PC-9 (cell line): ENCODE measurements at regions of chr17 and their contacts with region 1.

Region 1: DNA sequence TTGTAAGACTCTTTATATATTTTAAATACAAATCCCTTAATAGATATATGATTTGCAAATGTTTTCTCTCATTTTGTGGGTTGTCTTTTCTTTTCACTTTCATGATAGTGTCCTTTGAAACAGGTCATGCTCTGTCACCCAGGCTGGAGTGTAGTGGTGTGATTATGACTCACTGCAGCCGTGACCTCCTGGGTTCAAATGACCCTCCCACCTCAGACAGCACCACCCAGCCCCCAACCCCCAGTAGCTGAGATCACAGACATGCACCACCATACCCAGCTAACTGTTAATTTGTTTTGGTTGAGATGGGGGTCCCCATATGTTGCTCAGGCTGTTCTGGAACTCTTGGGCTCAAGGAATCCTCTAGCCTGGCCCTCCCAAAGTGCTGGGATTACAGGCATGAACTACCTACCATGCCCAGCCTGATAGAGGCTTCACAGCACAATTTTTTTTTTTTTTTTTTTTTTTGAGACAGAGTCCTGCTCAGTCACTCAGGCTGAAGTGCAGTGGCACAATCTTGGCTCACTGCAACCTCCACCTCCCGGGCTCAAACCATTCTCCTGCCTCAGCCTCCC is 18.5 kb upstream of the TMIGD1 start:
- DNase-seq: no peak
- H3K4me3 ChIP-seq: no peak overlapping the region
- H3K27ac ChIP-seq: no peak overlapping the region
- H3K4me1 ChIP-seq: 0 out of 2 replicates have a peak, but pooled peaks cover 2% of the 10 kb centered on the region
- H3K27me3 ChIP-seq: no peaks in the 10 kb centered on the region
- CTCF ChIP-seq: no peak

Region 2: GRCh38 chr17:30258503-30258902 is 93.8 kb before region 1 on chr17:
- CTCF ChIA-PET with region 1: no interaction called
- POLR2A ChIA-PET with region 1: interaction called, 11 read pairs
- intact Hi-C with region 1: no loop called
- DNase-seq: no peak
- H3K4me3 ChIP-seq: no peak overlapping the region
- H3K27ac ChIP-seq: no peak overlapping the region
- H3K4me1 ChIP-seq: no peaks in the 10 kb centered on the region
- H3K27me3 ChIP-seq: no peaks in the 10 kb centered on the region
- CTCF ChIP-seq: no peak